ENCODE measurements at regions of chr11 and their contacts with region 1.

Region 1: GRCh38 chr11:57800444-57801182 is 39.0 kb downstream of the CTNND1 start:
- DNase-seq: peak; percentile 71
- CTCF ChIP-seq: peak; percentile 67

Region 2: DNA sequence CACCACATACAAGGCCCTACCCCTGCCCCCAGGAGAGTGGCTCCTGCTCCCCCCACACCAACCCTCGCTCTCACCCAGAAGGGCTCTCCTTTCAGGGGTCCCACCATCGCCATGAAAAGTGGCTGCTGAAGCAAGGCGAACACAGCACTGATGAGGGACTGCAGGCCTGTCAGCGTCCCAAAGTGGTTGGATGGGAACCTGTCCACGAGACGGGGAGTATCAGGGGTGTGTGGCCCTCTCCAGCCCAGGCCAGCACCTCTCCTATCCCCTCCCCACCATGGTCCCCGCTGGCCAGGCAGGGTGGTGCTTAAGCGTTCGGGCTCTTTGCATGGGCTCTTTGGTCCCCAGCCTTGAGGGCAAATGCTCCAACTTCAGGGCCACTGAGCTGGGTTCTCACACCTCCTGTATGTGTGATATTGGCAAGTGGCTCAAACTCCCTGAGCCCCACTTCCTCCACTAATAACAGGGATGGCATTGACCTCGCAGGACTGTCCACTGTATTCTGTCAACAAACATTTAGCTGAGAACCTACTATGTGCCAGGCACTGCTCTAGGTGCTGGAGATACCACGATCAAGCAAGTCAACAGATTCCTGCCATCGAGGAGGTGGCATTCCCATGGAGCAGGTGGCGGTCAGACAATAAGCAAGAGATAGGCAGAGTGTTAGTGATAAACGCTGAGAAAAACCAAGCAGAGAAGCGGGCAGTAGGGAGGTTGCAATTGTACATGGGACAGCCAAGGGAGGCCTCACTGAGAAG is 313.4 kb before region 1 on chr11:
- CTCF ChIA-PET with region 1: no interaction called
- POLR2A ChIA-PET with region 1: no interaction called
- DNase-seq: no peak
- CTCF ChIP-seq: no peak

Region 3: GRCh38 chr11:57644748-57645688 is 155.6 kb before region 1 on chr11:
- CTCF ChIA-PET with region 1: interaction called, 12 read pairs
- POLR2A ChIA-PET with region 1: no interaction called
- DNase-seq: peak; percentile 82
- CTCF ChIP-seq: peak; percentile 65

Region 4: GRCh38 chr11:57712256-57713150 is 88.1 kb before region 1 on chr11 and contains the start of gene TMX2:
- CTCF ChIA-PET with region 1: interaction called, 11 read pairs
- POLR2A ChIA-PET with region 1: no interaction called
- DNase-seq: peak; percentile 91
- CTCF ChIP-seq: no peak

Region 5: DNA sequence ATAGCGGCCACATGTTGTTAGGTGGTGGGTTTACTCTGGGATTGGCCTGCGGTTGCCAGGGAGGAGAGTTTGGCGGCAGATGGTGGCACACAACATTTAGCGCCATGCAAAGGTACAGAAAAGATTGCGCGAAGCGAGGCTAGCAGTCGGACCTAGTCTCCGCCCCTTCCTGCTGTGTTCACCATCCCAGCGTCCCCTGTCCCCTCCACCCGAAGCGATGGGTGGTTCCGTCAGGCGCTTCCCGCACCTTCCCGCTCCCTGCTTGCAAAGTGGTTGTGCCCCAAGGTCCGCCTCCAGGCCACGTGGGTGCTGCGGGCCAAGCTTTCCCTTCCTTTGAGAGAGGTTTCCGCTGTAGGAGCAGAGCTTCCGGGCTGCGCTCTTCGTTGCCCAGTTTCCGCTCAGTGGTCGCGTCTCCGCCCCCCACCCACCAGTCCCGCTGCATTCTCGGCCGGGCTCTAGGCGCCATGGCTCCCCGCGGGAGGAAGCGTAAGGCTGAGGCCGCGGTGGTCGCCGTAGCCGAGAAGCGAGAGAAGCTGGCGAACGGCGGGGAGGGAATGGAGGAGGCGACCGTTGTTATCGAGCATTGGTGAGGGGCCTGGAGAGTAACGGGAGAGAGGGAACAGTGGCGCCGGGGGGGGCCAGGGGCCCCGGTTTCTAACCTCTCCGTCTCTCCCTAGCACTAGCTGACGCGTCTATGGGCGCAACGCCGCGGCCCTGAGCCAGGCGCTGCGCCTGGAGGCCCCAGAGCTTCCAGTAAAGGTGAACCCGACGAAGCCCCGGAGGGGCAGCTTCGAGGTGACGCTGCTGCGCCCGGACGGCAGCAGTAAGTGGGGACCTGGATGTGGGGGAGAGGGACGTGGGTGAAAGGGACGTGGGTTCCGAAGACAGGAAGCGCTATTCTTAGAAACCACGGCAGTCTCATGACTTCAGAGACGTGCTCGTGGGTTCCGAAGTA is 59.2 kb before region 1 on chr11 and contains the start of gene SELENOH:
- CTCF ChIA-PET with region 1: interaction called, 142 read pairs
- POLR2A ChIA-PET with region 1: interaction called, 5 read pairs
- DNase-seq: peak; percentile 91
- CTCF ChIP-seq: no peak

Region 6: GRCh38 chr11:57778318-57779037 is 22.1 kb before region 1 on chr11:
- CTCF ChIA-PET with region 1: interaction called, 57 read pairs
- POLR2A ChIA-PET with region 1: no interaction called
- DNase-seq: no peak
- CTCF ChIP-seq: no peak

Region 7: GRCh38 chr11:57812634-57813033 is 12.0 kb after region 1 on chr11:
- CTCF ChIA-PET with region 1: interaction called, 33 read pairs
- POLR2A ChIA-PET with region 1: interaction called, 3 read pairs
- DNase-seq: no peak
- CTCF ChIP-seq: no peak

Region 8: DNA sequence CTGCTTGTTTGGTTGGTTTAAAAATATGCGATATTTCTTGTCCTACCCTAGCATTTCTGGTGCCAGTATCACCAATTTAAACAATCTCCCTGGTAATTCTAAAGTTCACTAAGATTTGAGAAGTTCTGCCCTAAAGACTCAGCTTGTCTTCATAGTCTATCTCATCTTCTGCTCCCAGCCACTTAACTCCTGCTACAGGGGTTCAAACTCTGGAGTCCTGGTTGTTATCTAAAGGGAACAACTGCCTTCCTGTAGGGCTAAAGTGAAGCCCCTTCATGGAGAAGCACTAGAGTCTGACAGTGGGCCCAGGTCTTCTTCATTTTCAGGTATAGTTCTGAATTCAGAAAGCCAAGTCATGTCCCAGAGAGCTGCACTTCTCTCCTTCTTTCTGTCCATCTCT is 34.2 kb after region 1 on chr11:
- CTCF ChIA-PET with region 1: interaction called, 13 read pairs
- POLR2A ChIA-PET with region 1: no interaction called
- DNase-seq: no peak
- CTCF ChIP-seq: no peak

Measured in GM10248 (cell line).